CD4-positive, alpha-beta T cell (primary cell): ENCODE measurements at regions of chr18 and their contacts with region 1.

Region 1: GRCh38 chr18:13464432-13465123 is 246.0 kb downstream of the LDLRAD4 start:
- DNase-seq: peak; percentile 36 to 86 (median 68)
- ATAC-seq: peak; percentile 95
- H3K4me3 ChIP-seq: peak overlapping the region; percentile 63
- H3K4me3 Mint-ChIP-seq: peak overlapping the region; percentile 91
- H3K27ac ChIP-seq: peak overlapping the region; percentile 60 to 64
- H3K27ac Mint-ChIP-seq: peak overlapping the region; percentile 97
- H3K4me1 ChIP-seq: peaks cover 50% of the 10 kb centered on the region
- H3K4me1 Mint-ChIP-seq: peaks cover 86% of the 10 kb centered on the region
- H3K27me3 ChIP-seq: no peaks in the 10 kb centered on the region
- H3K27me3 Mint-ChIP-seq: no peaks in the 10 kb centered on the region
- CTCF ChIP-seq: peak; percentile 19

Region 2: GRCh38 chr18:13425462-13426133 is 39.0 kb before region 1 on chr18:
- CTCF ChIA-PET with region 1: no interaction called
- POLR2A ChIA-PET with region 1: no interaction called
- intact Hi-C with region 1: no loop called
- DNase-seq: peak in 4 of 14 experiments; percentile 5 to 54 (median 34)
- ATAC-seq: peak; percentile 89
- H3K4me3 ChIP-seq: no peak overlapping the region
- H3K4me3 Mint-ChIP-seq: no peak overlapping the region
- H3K27ac ChIP-seq: no peak overlapping the region
- H3K27ac Mint-ChIP-seq: no peak overlapping the region
- H3K4me1 ChIP-seq: peaks cover 24% of the 10 kb centered on the region
- H3K4me1 Mint-ChIP-seq: peaks cover 59% of the 10 kb centered on the region
- H3K27me3 ChIP-seq: no peaks in the 10 kb centered on the region
- H3K27me3 Mint-ChIP-seq: no peaks in the 10 kb centered on the region
- CTCF ChIP-seq: no peak

Region 3: DNA sequence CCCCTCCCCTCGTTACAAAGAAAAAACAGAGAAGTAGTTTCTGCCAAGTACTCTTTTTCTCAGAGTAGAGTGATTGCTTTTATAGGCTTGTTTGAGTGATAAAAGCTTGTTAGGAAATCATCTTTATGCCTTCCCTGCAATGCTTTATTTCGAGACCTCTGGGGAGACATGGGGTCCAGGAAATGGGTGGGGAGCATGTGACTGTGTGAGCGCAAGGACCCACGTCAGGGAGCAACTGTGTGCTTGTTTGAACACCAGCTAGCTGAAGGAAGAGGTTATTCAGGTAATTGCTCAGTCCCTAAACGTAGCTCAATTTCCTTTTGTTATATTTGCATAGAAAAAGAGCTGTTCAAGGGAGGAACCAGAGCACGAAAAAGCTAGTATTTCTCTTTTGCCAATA is 74.5 kb after region 1 on chr18:
- CTCF ChIA-PET with region 1: no interaction called
- POLR2A ChIA-PET with region 1: no interaction called
- intact Hi-C with region 1: loop called in 1 of 2 experiments (anchors 5 kb)
- DNase-seq: peak in 11 of 14 experiments; percentile 14 to 71 (median 44)
- ATAC-seq: peak; percentile 93
- H3K4me3 ChIP-seq: no peak overlapping the region
- H3K4me3 Mint-ChIP-seq: peak overlapping the region; percentile 83
- H3K27ac ChIP-seq: peak overlapping the region in 1 of 2 donors; percentile 12
- H3K27ac Mint-ChIP-seq: peak overlapping the region; percentile 89
- H3K4me1 ChIP-seq: peaks cover 27% of the 10 kb centered on the region
- H3K4me1 Mint-ChIP-seq: peaks cover 81% of the 10 kb centered on the region
- H3K27me3 ChIP-seq: no peaks in the 10 kb centered on the region
- H3K27me3 Mint-ChIP-seq: no peaks in the 10 kb centered on the region
- CTCF ChIP-seq: no peak